Dendritic cell treated with granulocyte-macrophage colony-stimulating factor and Interleukin-4, amounts not matched to agents 40 ng/mL and 50 ng/mL, for 4 days (primary cell): ENCODE measurements at regions of chr3 and their contacts with region 1.

Region 1: GRCh38 chr3:153319705-153320554 is 157.9 kb downstream of the RAP2B start:
- H3K4me3 Mint-ChIP-seq: peak overlapping the region; percentile 23
- H3K27ac Mint-ChIP-seq: peak overlapping the region; percentile 73
- H3K4me1 Mint-ChIP-seq: peaks cover 29% of the 10 kb centered on the region
- H3K27me3 Mint-ChIP-seq: no peaks in the 10 kb centered on the region

Region 2: GRCh38 chr3:153273767-153274435 is 46.0 kb before region 1 on chr3:
- intact Hi-C with region 1: no loop called
- H3K4me3 Mint-ChIP-seq: no peak overlapping the region
- H3K27ac Mint-ChIP-seq: peak overlapping the region; percentile 16
- H3K4me1 Mint-ChIP-seq: peaks cover 32% of the 10 kb centered on the region
- H3K27me3 Mint-ChIP-seq: peaks cover 2% of the 10 kb centered on the region

Region 3: DNA sequence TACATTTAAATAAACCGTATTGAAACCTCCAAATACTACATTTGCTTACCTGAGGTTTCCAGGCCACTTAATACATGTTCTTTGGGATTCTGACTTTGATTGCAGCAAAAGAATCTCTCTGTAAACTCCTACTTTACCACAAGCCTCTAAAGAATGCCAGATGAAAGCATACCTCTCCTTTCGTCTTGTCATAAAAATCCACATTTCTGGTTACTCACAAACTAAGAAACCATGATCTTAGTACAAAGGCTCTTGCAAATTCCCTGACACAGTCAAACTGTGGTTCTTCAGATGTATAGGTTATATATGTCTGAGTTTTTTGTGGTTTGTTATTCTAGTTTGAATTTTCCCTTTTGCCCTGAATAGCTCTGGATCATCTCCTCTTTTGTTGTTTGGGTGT is 30.5 kb after region 1 on chr3:
- intact Hi-C with region 1: no loop called
- H3K4me3 Mint-ChIP-seq: no peak overlapping the region
- H3K27ac Mint-ChIP-seq: no peak overlapping the region
- H3K4me1 Mint-ChIP-seq: peaks cover 15% of the 10 kb centered on the region
- H3K27me3 Mint-ChIP-seq: no peaks in the 10 kb centered on the region

Region 4: GRCh38 chr3:153439777-153440176 is 119.8 kb after region 1 on chr3:
- intact Hi-C with region 1: loop called (anchors 5 kb)
- H3K4me3 Mint-ChIP-seq: no peak overlapping the region
- H3K27ac Mint-ChIP-seq: no peak overlapping the region
- H3K4me1 Mint-ChIP-seq: peaks cover 11% of the 10 kb centered on the region
- H3K27me3 Mint-ChIP-seq: no peaks in the 10 kb centered on the region